ENCODE measurements at regions of chr2 and their contacts with region 1.

Region 1: DNA sequence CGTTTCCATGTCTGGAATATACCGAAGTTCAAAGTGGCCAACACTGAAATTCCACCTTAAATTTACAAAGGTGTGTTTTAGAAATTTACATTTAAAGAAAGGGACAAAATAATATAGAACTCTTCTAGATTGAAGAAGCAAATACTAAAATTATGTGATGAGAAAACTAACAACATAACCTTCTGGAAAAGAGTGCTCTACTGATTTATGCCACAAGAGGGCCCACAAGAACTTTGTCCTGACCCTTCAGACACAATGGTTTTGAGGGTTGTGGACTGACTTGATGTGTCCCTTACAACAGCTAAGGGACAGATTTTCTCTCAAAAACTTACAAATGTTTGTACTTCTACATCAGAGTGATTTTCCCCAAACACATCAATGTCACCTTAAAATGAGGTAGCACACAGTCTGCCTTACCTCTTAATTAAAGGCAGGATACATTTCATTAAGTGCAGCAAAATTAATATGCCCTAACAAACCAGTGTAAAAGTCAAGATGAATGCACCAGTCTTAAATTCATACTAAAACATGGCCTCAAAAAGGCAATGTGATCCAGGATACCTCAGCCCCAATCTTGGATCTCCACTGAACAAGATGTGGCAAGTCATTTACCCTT is 36.2 kb downstream of the EIF2AK3 start:
- DNase-seq: peak in 1 of 2 donors; percentile 67
- H3K4me3 ChIP-seq: no peak overlapping the region
- H3K27ac ChIP-seq: no peak overlapping the region
- H3K4me1 ChIP-seq: no peaks in the 10 kb centered on the region
- H3K27me3 ChIP-seq: no peaks in the 10 kb centered on the region
- CTCF ChIP-seq: peak; percentile 63 to 77 (median 69)

Region 2: DNA sequence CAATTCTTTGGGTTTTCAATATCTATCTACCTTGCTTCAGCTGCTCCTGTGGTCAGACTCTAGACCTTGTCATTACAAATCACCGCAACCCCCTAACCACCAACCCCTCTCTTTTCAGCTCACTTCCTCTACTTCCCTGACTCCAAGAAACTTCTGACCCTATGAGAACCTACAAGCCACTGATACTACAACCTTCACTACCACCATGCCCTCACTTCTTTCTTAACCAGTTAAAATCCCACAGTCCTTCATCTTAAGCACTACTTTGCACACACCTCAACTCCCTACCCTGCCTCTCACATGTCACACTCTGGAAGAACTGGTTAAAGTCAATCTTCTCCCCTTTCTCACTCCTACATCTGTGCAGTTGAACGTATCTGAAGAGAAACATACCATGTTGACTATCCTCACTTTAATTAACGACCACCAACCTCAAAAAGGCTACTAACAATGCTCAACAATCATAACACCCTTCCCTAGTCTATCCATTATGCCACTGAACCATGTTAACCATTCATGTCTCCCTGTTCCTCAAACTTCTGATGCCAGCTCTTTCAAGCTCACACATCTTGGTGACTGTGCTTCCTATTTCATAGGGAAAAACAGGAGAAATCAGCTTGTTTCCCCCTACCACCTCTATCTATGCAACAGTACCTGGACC is 23.5 kb after region 1 on chr2:
- intact Hi-C with region 1: no loop called
- DNase-seq: no peak
- H3K4me3 ChIP-seq: no peak overlapping the region
- H3K27ac ChIP-seq: no peak overlapping the region
- H3K4me1 ChIP-seq: no peaks in the 10 kb centered on the region
- H3K27me3 ChIP-seq: no peaks in the 10 kb centered on the region
- CTCF ChIP-seq: no peak

Region 3: GRCh38 chr2:88669371-88670214 is 78.5 kb after region 1 on chr2:
- intact Hi-C with region 1: loop called (anchors 1 kb)
- DNase-seq: no peak
- H3K4me3 ChIP-seq: no peak overlapping the region
- H3K27ac ChIP-seq: no peak overlapping the region
- H3K4me1 ChIP-seq: no peaks in the 10 kb centered on the region
- H3K27me3 ChIP-seq: no peaks in the 10 kb centered on the region
- CTCF ChIP-seq: peak; percentile 8 to 58 (median 45)

Measured in ascending aorta (tissue), 2 donors.